CD4-positive, alpha-beta T cell (primary cell): ENCODE measurements at regions of chr9 and their contacts with region 1.

Region 1: DNA sequence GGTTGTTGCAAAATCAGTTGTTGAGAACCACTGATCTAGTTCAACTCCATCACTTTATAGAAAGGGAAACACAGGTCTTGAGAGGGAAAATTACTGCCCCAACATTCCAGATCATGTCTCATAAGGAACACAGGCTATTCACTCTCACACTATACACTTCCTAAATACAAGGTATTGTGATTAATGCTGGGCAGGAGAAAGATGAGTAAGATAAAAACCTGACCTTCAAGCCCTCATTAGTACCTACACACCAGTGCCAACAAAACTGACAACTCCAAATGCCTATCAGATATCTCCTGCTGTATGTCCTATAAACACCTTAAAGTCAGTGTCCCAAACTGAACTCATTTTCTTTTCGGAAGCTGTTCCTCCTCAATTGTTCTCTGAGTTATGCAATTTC is 8.2 kb downstream of the GNE start:
- DNase-seq: no peak
- ATAC-seq: no peak
- H3K4me3 ChIP-seq: no peak overlapping the region
- H3K4me3 Mint-ChIP-seq: no peak overlapping the region
- H3K27ac ChIP-seq: no peak overlapping the region
- H3K27ac Mint-ChIP-seq: peak overlapping the region; percentile 32
- H3K4me1 ChIP-seq: no peaks in the 10 kb centered on the region
- H3K4me1 Mint-ChIP-seq: peaks cover 28% of the 10 kb centered on the region
- H3K27me3 ChIP-seq: no peaks in the 10 kb centered on the region
- H3K27me3 Mint-ChIP-seq: no peaks in the 10 kb centered on the region
- CTCF ChIP-seq: no peak

Region 2: GRCh38 chr9:36328798-36329411 is 78.8 kb after region 1 on chr9:
- CTCF ChIA-PET with region 1: interaction called, 23 read pairs
- POLR2A ChIA-PET with region 1: no interaction called
- intact Hi-C with region 1: loop called (anchors 1 kb)
- DNase-seq: peak in 11 of 14 experiments; percentile 3 to 82 (median 22)
- ATAC-seq: peak; percentile 79
- H3K4me3 ChIP-seq: no peak overlapping the region
- H3K4me3 Mint-ChIP-seq: no peak overlapping the region
- H3K27ac ChIP-seq: no peak overlapping the region
- H3K27ac Mint-ChIP-seq: no peak overlapping the region
- H3K4me1 ChIP-seq: no peaks in the 10 kb centered on the region
- H3K4me1 Mint-ChIP-seq: peaks cover 5% of the 10 kb centered on the region
- H3K27me3 ChIP-seq: no peaks in the 10 kb centered on the region
- H3K27me3 Mint-ChIP-seq: no peaks in the 10 kb centered on the region
- CTCF ChIP-seq: peak; percentile 88

Region 3: GRCh38 chr9:36728651-36729520 is 478.8 kb after region 1 on chr9:
- CTCF ChIA-PET with region 1: no interaction called
- POLR2A ChIA-PET with region 1: no interaction called
- intact Hi-C with region 1: loop called in 1 of 2 experiments (anchors 5 kb)
- DNase-seq: peak; percentile 38 to 73 (median 48)
- ATAC-seq: peak; percentile 49
- H3K4me3 ChIP-seq: no peak overlapping the region
- H3K4me3 Mint-ChIP-seq: no peak overlapping the region
- H3K27ac ChIP-seq: no peak overlapping the region
- H3K27ac Mint-ChIP-seq: no peak overlapping the region
- H3K4me1 ChIP-seq: no peaks in the 10 kb centered on the region
- H3K4me1 Mint-ChIP-seq: no peaks in the 10 kb centered on the region
- H3K27me3 ChIP-seq: peaks cover 0 to under 1% of the 10 kb centered on the region in 2 experiments
- H3K27me3 Mint-ChIP-seq: no peaks in the 10 kb centered on the region
- CTCF ChIP-seq: peak; percentile 82